ENCODE measurements at regions of chr17 and their contacts with region 1.

Region 1: GRCh38 chr17:51413723-51414122 is 153.4 kb downstream of the UTP18 start:
- DNase-seq: no peak
- ATAC-seq: no peak
- H3K4me3 ChIP-seq: no peak overlapping the region
- H3K27ac ChIP-seq: no peak overlapping the region
- H3K4me1 ChIP-seq: no peaks in the 10 kb centered on the region
- H3K27me3 ChIP-seq: no peaks in the 10 kb centered on the region; the same call in 1 of the 2 replicates
- CTCF ChIP-seq: no peak

Region 2: GRCh38 chr17:51472670-51473205 is 59.0 kb after region 1 on chr17:
- CTCF ChIA-PET with region 1: interaction called, 15 read pairs
- POLR2A ChIA-PET with region 1: no interaction called
- in situ Hi-C with region 1: no loop called
- intact Hi-C with region 1: no loop called
- DNase-seq: no peak
- ATAC-seq: no peak
- H3K4me3 ChIP-seq: no peak overlapping the region
- H3K27ac ChIP-seq: no peak overlapping the region
- H3K4me1 ChIP-seq: no peaks in the 10 kb centered on the region
- H3K27me3 ChIP-seq: peaks cover 21% of the 10 kb centered on the region
- CTCF ChIP-seq: no peak